Posterior vena cava (tissue), 2 donors: ENCODE measurements at regions of chr20 and their contacts with region 1.

Region 1: GRCh38 chr20:4720041-4720976 is 1.4 kb upstream of the PRND start:
- DNase-seq: peak; percentile 93

Region 2: GRCh38 chr20:3021327-3021726 is 1699.0 kb before region 1 on chr20:
- intact Hi-C with region 1: no loop called
- DNase-seq: no peak

Region 3: GRCh38 chr20:4607287-4607713 is 113.0 kb before region 1 on chr20:
- intact Hi-C with region 1: loop called (anchors 2 kb)
- DNase-seq: no peak

Region 4: GRCh38 chr20:4613718-4614620 is 106.3 kb before region 1 on chr20:
- intact Hi-C with region 1: loop called (anchors 2 kb)
- DNase-seq: no peak

Region 5: GRCh38 chr20:4774207-4774606 is 53.9 kb after region 1 on chr20:
- intact Hi-C with region 1: no loop called
- DNase-seq: no peak